Sigmoid colon (tissue), 7 donors: ENCODE measurements at regions of chr1 and their contacts with region 1.

Region 1: DNA sequence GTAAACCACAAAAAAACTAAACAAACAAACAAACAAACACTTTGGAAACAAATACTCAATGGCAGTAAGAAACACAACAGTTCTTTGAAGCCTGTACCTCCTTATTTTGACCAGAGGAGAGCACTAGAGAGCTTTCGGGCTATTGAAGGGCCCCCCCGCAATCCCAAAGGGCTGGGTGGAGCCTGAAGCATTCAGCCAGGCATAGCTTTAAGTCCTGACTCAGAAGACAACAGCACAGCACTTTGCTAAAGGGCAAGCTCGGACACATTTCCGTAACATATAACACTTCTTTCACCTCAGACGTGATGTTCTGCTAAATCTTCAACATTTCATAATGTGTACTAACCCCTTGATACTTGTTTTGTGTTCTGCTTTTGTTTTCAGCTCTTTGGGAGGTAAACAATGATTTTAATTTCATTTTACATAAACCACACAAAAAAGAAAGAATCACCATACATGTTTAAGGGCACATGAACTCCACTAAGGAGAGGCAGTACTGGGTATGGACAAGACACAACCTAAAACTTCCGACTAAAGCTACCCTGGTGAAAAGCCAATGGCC is 9.7 kb upstream of the SHCBP1L start:
- DNase-seq: peak; percentile 94
- H3K4me3 ChIP-seq: peak overlapping the region; percentile 13 to 26 (median 21)
- H3K27ac ChIP-seq: peak overlapping the region; percentile 62 to 74 (median 70)
- H3K4me1 ChIP-seq: peaks cover 0 to 8% (median 3%) of the 10 kb centered on the region in 4 donors
- H3K27me3 ChIP-seq: no peaks in the 10 kb centered on the region
- CTCF ChIP-seq: peak; percentile 92 to 97 (median 94)
- EP300 ChIP-seq: no peak
- POLR2A ChIP-seq: no peak

Region 2: GRCh38 chr1:182811975-182812725 is 150.5 kb before region 1 on chr1:
- intact Hi-C with region 1: no loop called
- DNase-seq: no peak
- H3K4me3 ChIP-seq: no peak overlapping the region
- H3K27ac ChIP-seq: no peak overlapping the region
- H3K4me1 ChIP-seq: no peaks in the 10 kb centered on the region
- H3K27me3 ChIP-seq: no peaks in the 10 kb centered on the region
- CTCF ChIP-seq: no peak
- EP300 ChIP-seq: no peak
- POLR2A ChIP-seq: no peak

Region 3: DNA sequence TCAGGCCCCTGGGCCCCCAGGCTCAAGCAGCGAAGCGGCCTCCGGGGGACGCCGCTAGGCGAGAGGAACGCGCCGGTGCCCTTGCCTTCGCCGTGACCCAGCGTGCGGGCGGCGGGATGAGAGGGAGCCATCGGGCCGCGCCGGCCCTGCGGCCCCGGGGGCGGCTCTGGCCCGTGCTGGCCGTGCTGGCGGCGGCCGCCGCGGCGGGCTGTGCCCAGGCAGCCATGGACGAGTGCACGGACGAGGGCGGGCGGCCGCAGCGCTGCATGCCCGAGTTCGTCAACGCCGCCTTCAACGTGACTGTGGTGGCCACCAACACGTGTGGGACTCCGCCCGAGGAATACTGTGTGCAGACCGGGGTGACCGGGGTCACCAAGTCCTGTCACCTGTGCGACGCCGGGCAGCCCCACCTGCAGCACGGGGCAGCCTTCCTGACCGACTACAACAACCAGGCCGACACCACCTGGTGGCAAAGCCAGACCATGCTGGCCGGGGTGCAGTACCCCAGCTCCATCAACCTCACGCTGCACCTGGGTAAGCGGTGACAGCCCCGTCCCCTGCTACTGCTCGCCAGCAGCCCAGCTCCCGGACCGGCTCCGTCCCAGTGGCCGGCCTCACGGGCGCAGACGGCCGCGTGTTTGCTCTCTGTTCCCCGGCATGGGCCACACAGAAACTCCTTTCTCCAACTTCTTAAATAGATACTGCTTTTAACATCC is 61.1 kb after region 1 on chr1:
- intact Hi-C with region 1: loop called (anchors 2 kb)
- DNase-seq: peak; percentile 81
- H3K4me3 ChIP-seq: peak overlapping the region; percentile 86 to 97 (median 90)
- H3K27ac ChIP-seq: peak overlapping the region; percentile 100
- H3K4me1 ChIP-seq: peaks cover 0 to 41% (median 30%) of the 10 kb centered on the region in 4 donors
- H3K27me3 ChIP-seq: no peaks in the 10 kb centered on the region
- CTCF ChIP-seq: peak in 3 of 4 experiments; percentile 48 to 65 (median 63)
- EP300 ChIP-seq: no peak
- POLR2A ChIP-seq: no peak

Region 4: GRCh38 chr1:183148599-183148998 is 186.0 kb after region 1 on chr1:
- intact Hi-C with region 1: loop called (anchors 5 kb)
- DNase-seq: no peak
- H3K4me3 ChIP-seq: no peak overlapping the region
- H3K27ac ChIP-seq: peak overlapping the region; percentile 34 to 70 (median 54)
- H3K4me1 ChIP-seq: peaks cover 0 to 15% (median 10%) of the 10 kb centered on the region in 4 donors
- H3K27me3 ChIP-seq: no peaks in the 10 kb centered on the region
- CTCF ChIP-seq: no peak
- EP300 ChIP-seq: no peak
- POLR2A ChIP-seq: no peak

Region 5: DNA sequence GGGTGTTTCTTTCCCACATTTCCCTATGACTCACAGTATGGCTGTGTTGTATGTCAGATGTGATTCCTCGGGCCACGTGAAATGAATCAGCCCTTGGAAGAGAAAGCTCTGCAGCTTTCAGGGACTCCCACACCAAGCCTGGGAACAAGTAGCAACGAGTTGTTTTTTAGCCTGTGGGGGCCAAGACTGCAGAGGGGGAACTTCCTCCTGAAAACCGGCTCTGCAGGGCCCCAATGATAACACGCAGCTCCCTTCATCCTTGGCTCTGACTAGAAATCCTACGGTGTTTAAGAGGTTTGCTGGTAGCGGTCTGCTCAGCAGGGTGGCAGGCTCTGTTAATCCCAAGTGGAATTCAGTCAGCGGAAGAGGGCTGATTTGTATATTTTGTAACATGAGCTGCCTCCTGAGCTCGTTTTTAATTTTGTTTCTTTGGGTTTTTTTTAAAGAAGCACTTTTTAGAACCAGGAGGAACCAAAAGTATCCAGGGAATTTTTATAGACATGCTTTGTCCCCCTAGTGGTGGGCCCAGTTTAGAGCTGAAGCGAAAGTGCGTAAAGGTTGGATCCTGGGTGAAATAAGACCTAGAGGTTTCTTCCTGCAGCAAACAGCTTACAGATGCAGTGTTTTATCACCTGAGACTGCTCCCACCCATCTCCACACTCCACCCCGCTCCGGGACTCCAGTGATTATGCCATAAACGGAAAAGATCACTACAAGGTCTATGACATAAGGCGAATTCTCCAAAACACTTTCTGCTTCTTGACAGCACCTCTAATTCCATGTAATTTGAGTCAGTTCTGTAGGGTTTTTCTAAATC is 272.2 kb after region 1 on chr1:
- intact Hi-C with region 1: loop called (anchors 2 kb)
- DNase-seq: peak; percentile 92
- H3K4me3 ChIP-seq: peak overlapping the region; percentile 20 to 41 (median 33)
- H3K27ac ChIP-seq: peak overlapping the region; percentile 75 to 91 (median 81)
- H3K4me1 ChIP-seq: peaks cover 0 to 28% (median 17%) of the 10 kb centered on the region in 4 donors
- H3K27me3 ChIP-seq: no peaks in the 10 kb centered on the region
- CTCF ChIP-seq: peak; percentile 69 to 92 (median 74)
- EP300 ChIP-seq: peak in 1 of 4 donors; percentile 76
- POLR2A ChIP-seq: no peak

Region 6: GRCh38 chr1:183281553-183282091 is 319.0 kb after region 1 on chr1:
- intact Hi-C with region 1: loop called (anchors 2 kb)
- DNase-seq: peak; percentile 97
- H3K4me3 ChIP-seq: peak overlapping the region in 2 of 4 donors; percentile 3 to 6
- H3K27ac ChIP-seq: peak overlapping the region; percentile 72 to 84 (median 76)
- H3K4me1 ChIP-seq: peaks cover 0 to 65% (median 46%) of the 10 kb centered on the region in 4 donors
- H3K27me3 ChIP-seq: no peaks in the 10 kb centered on the region
- CTCF ChIP-seq: peak; percentile 89 to 94 (median 93)
- EP300 ChIP-seq: no peak
- POLR2A ChIP-seq: no peak

Region 7: GRCh38 chr1:183318433-183318832 is 355.8 kb after region 1 on chr1:
- intact Hi-C with region 1: loop called (anchors 2 kb)
- DNase-seq: peak; percentile 95
- H3K4me3 ChIP-seq: no peak overlapping the region
- H3K27ac ChIP-seq: peak overlapping the region; percentile 75 to 80 (median 78)
- H3K4me1 ChIP-seq: peaks cover 0 to 57% (median 35%) of the 10 kb centered on the region in 4 donors
- H3K27me3 ChIP-seq: no peaks in the 10 kb centered on the region
- CTCF ChIP-seq: peak; percentile 38 to 68 (median 60)
- EP300 ChIP-seq: no peak
- POLR2A ChIP-seq: no peak

Region 8: DNA sequence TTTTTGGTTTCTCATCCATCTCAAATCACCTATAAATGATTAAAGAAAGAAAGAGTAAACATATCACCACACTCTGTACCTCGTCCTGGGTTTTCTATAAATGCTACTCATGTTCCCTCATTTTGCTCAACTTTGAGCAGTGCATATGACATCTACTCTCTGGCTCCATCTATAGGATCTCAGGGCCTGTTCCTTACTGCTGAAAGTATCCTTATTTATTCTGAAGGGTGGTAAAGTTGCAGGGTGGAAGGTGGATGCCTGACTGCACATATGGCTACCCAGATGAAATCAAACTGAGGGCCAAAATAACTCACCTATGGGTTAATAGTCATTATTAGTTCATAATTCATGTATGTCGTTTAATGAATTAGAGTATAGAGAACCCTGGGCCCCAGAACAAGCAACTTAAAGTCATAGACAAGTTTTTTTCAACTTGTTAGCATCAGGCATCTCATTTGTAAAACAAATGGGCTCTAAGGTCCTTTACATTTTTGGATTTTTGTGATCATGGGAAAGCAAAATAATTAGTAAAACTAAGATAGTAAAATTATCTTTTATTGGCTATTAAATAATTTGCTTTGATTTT is 581.1 kb after region 1 on chr1:
- intact Hi-C with region 1: loop called (anchors 5 kb)
- DNase-seq: no peak
- H3K4me3 ChIP-seq: no peak overlapping the region
- H3K27ac ChIP-seq: no peak overlapping the region
- H3K4me1 ChIP-seq: peaks cover 0 to 8% (median 3%) of the 10 kb centered on the region in 4 donors
- H3K27me3 ChIP-seq: no peaks in the 10 kb centered on the region
- CTCF ChIP-seq: peak; percentile 20 to 68 (median 59)
- EP300 ChIP-seq: no peak
- POLR2A ChIP-seq: no peak